ENCODE measurements at regions of chr18 and their contacts with region 1.

Region 1: GRCh38 chr18:26383454-26384270 is 157.4 kb downstream of the TAF4B start:
- DNase-seq: peak; percentile 15
- ATAC-seq: peak; percentile 96
- H3K4me3 ChIP-seq: no peak overlapping the region
- H3K27ac ChIP-seq: no peak overlapping the region
- H3K4me1 ChIP-seq: 0 out of 2 replicates have a peak, but pooled peaks cover 3% of the 10 kb centered on the region
- H3K27me3 ChIP-seq: no peaks in the 10 kb centered on the region
- CTCF ChIP-seq: peak; percentile 62 to 76 (median 62)
- EP300 ChIP-seq: no peak
- POLR2A ChIP-seq: no peak
- RAD21 ChIP-seq: peak; percentile 77

Region 2: DNA sequence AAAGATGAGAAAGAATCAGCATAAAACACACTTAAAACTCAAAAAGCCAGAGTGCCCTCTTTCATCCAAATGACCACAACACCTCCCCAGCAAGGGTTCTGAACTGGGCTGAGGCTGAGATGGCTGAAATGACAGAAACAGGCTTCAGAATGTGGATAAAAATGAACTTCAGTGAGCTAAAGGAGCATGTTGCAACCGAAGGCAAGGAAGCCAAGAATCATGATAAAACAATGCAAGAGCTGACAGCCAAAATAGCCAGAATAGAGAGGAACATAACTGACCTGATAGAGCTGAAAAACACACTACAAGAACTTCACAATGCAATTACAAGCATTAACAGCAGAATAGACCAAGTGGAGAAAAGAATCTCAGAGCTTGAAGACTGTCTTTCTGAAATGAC is 262.2 kb before region 1 on chr18:
- CTCF ChIA-PET with region 1: no interaction called
- POLR2A ChIA-PET with region 1: no interaction called
- RAD21 ChIA-PET with region 1: no interaction called
- SMC1A ChIA-PET with region 1: no interaction called
- in situ Hi-C with region 1: no loop called
- intact Hi-C with region 1: no loop called
- DNase-seq: no peak
- ATAC-seq: no peak
- H3K4me3 ChIP-seq: no peak overlapping the region
- H3K27ac ChIP-seq: no peak overlapping the region
- H3K4me1 ChIP-seq: no peaks in the 10 kb centered on the region
- H3K27me3 ChIP-seq: no peaks in the 10 kb centered on the region; a peak in 1 of 4 replicates
- CTCF ChIP-seq: no peak
- EP300 ChIP-seq: no peak
- POLR2A ChIP-seq: no peak
- RAD21 ChIP-seq: no peak

Region 3: GRCh38 chr18:26307189-26307773 is 76.4 kb before region 1 on chr18:
- CTCF ChIA-PET with region 1: interaction called, 30 read pairs
- POLR2A ChIA-PET with region 1: interaction called, 5 read pairs
- RAD21 ChIA-PET with region 1: interaction called, 28 read pairs
- SMC1A ChIA-PET with region 1: interaction called, 22 read pairs
- in situ Hi-C with region 1: no loop called
- intact Hi-C with region 1: loop called (anchors 5 kb)
- DNase-seq: peak; percentile 24
- ATAC-seq: peak; percentile 92
- H3K4me3 ChIP-seq: no peak overlapping the region
- H3K27ac ChIP-seq: no peak overlapping the region
- H3K4me1 ChIP-seq: no peaks in the 10 kb centered on the region
- H3K27me3 ChIP-seq: no peaks in the 10 kb centered on the region
- CTCF ChIP-seq: peak; percentile 65 to 72 (median 69)
- EP300 ChIP-seq: no peak
- POLR2A ChIP-seq: no peak
- RAD21 ChIP-seq: peak; percentile 90

Region 4: DNA sequence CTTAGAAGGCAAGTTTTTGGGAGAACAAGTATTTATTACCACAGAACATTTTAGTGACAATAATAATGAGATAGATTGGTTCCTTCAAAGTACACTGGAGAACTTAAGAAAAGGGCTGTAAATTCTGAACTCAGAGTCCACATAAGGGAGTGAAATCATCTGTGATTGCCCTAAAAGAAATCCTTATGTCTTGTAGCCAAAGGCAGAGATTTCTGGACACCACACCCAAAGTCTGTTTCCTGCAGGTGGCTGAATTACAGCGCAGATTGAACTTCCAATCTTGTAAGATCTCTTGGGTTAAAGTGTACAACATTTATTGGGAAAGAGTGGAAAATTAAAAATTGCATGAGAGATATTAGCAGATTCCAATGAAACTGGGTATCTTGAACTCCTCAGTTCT is 13.6 kb before region 1 on chr18:
- CTCF ChIA-PET with region 1: interaction called, 37 read pairs
- POLR2A ChIA-PET with region 1: no interaction called
- RAD21 ChIA-PET with region 1: interaction called, 15 read pairs
- SMC1A ChIA-PET with region 1: interaction called, 20 read pairs
- in situ Hi-C with region 1: no loop called
- intact Hi-C with region 1: no loop called
- DNase-seq: no peak
- ATAC-seq: no peak
- H3K4me3 ChIP-seq: no peak overlapping the region
- H3K27ac ChIP-seq: no peak overlapping the region
- H3K4me1 ChIP-seq: no peaks in the 10 kb centered on the region
- H3K27me3 ChIP-seq: no peaks in the 10 kb centered on the region
- CTCF ChIP-seq: no peak
- EP300 ChIP-seq: no peak
- POLR2A ChIP-seq: no peak
- RAD21 ChIP-seq: no peak

Region 5: GRCh38 chr18:26438980-26439379 is 55.3 kb after region 1 on chr18:
- CTCF ChIA-PET with region 1: interaction called, 11 read pairs
- POLR2A ChIA-PET with region 1: no interaction called
- RAD21 ChIA-PET with region 1: interaction called, 5 read pairs
- SMC1A ChIA-PET with region 1: interaction called, 3 read pairs
- in situ Hi-C with region 1: no loop called
- intact Hi-C with region 1: no loop called
- DNase-seq: no peak
- ATAC-seq: peak; percentile 96
- H3K4me3 ChIP-seq: no peak overlapping the region
- H3K27ac ChIP-seq: no peak overlapping the region
- H3K4me1 ChIP-seq: peaks cover 10% of the 10 kb centered on the region; the same call in 1 of the 2 replicates
- H3K27me3 ChIP-seq: no peaks in the 10 kb centered on the region
- CTCF ChIP-seq: no peak
- EP300 ChIP-seq: no peak
- POLR2A ChIP-seq: no peak
- RAD21 ChIP-seq: 0 out of 2 replicates have a peak, but pooled peaks have one; percentile 2

Region 6: GRCh38 chr18:26548429-26549262 is 165.0 kb after region 1 on chr18 and contains the start of gene KCTD1:
- CTCF ChIA-PET with region 1: interaction called, 14 read pairs
- POLR2A ChIA-PET with region 1: no interaction called
- RAD21 ChIA-PET with region 1: interaction called, 10 read pairs
- SMC1A ChIA-PET with region 1: interaction called, 10 read pairs
- in situ Hi-C with region 1: no loop called
- intact Hi-C with region 1: loop called (anchors 5 kb)
- DNase-seq: no peak
- ATAC-seq: peak; percentile 70
- H3K4me3 ChIP-seq: peak within 1 kb of the TSS; percentile 70
- H3K27ac ChIP-seq: peak within 1 kb of the TSS; percentile 67
- H3K4me1 ChIP-seq: peaks cover 31% of the 10 kb centered on the region
- H3K27me3 ChIP-seq: peaks cover 4 to 8% of the 10 kb centered on the region in 2 experiments
- CTCF ChIP-seq: no peak
- EP300 ChIP-seq: no peak
- POLR2A ChIP-seq: peak; percentile 46; the same call in 1 of the 2 replicates
- RAD21 ChIP-seq: no peak
- polyA plus RNA-seq, gene KCTD1: 1.5 to 1.8 TPM

Region 7: GRCh38 chr18:26771524-26771923 is 387.9 kb after region 1 on chr18:
- CTCF ChIA-PET with region 1: interaction called, 3 read pairs
- POLR2A ChIA-PET with region 1: no interaction called
- RAD21 ChIA-PET with region 1: no interaction called
- SMC1A ChIA-PET with region 1: no interaction called
- in situ Hi-C with region 1: no loop called
- intact Hi-C with region 1: loop called (anchors 10 kb)
- DNase-seq: no peak
- ATAC-seq: peak; percentile 71
- H3K4me3 ChIP-seq: no peak overlapping the region
- H3K27ac ChIP-seq: no peak overlapping the region
- H3K4me1 ChIP-seq: no peaks in the 10 kb centered on the region
- H3K27me3 ChIP-seq: no peaks in the 10 kb centered on the region; a peak in 1 of 4 replicates
- CTCF ChIP-seq: peak; percentile 45 to 47 (median 47); a peak in 5 of 6 replicates
- EP300 ChIP-seq: no peak
- POLR2A ChIP-seq: no peak
- RAD21 ChIP-seq: peak; percentile 63

Region 8: DNA sequence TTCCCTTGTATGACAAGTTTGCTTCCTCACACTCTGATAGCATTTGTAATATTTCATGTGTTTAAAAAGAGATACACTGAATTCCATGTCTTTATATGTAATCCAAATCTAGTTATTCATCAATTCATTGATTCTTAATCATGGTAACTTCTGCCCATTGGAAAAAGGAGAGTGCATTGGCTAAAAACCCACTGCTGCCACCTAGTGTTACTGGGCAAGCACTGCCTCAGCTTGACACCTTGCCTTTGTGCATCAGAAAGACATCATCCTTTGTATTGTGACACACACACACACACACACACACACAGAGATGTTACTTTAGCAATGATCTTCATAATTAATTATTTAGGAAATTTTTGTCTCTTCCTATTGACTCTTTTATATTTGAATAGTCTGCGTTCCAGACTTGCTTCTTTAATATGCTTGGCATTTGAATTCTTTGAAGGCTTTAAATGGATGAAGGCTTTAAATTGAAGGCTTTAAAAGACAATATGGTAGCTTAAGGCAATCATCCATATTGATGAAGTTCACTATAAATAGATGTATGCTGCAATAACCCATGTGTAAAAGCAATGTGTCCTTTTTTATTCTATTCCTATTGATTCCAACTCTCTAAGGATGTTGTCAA is 1215.7 kb after region 1 on chr18:
- CTCF ChIA-PET with region 1: no interaction called
- POLR2A ChIA-PET with region 1: no interaction called
- RAD21 ChIA-PET with region 1: no interaction called
- SMC1A ChIA-PET with region 1: no interaction called
- in situ Hi-C with region 1: no loop called
- intact Hi-C with region 1: no loop called
- DNase-seq: no peak
- ATAC-seq: peak; percentile 88
- H3K4me3 ChIP-seq: no peak overlapping the region
- H3K27ac ChIP-seq: no peak overlapping the region
- H3K4me1 ChIP-seq: no peaks in the 10 kb centered on the region
- H3K27me3 ChIP-seq: no peaks in the 10 kb centered on the region
- CTCF ChIP-seq: peak; percentile 87 to 95 (median 87)
- EP300 ChIP-seq: no peak
- POLR2A ChIP-seq: no peak
- RAD21 ChIP-seq: peak; percentile 79

Measured in GM12878 (cell line).